HCT116 (cell line): ENCODE measurements at regions of chr21 and their contacts with region 1.

Region 1: DNA sequence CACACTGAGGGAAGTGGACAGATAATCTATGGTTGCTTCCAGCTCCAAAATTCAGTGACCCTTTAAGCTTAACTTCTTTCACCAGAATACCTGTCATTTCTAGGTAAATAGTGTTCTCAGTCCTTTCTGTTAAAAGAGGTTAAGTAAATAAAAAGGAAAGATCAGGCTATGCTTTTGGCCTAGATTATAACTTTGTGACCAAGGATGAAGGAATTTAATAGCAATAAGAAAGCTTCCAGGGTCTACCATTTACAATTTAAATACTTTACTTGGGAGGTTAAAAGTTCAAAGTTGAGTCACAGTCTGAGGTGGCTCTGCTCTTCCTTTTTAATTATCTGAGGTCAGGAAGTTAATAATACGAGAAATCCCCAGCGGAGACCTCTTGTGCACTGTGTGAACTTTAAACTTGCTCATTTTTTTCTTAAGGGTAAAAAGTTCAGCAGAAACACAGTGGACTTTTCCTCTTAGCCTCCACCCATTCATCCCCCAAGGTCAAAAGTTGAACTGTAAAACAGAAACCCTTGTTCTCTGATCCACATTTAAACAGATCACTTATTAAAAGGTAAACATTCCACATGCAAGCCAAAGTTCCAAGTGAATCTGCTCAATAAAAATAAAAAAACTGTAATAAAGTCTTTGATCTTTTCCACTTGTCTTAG is 187.1 kb downstream of the NRIP1 start:
- DNase-seq: no peak
- ATAC-seq: peak; percentile 58
- H3K4me3 ChIP-seq: peak overlapping the region in 1 of 2 experiments; percentile 3; a peak in 1 of 4 replicates
- H3K27ac ChIP-seq: peak overlapping the region; percentile 85; the same call in 1 of the 2 replicates
- H3K4me1 ChIP-seq: peaks cover 63 to 78% of the 10 kb centered on the region in 2 experiments
- H3K27me3 ChIP-seq: no peaks in the 10 kb centered on the region
- CTCF ChIP-seq: no peak
- POLR2A ChIP-seq: no peak
- RAD21 ChIP-seq: no peak

Region 2: GRCh38 chr21:14567331-14568279 is 310.1 kb before region 1 on chr21:
- CTCF ChIA-PET with region 1: no interaction called
- POLR2A ChIA-PET with region 1: no interaction called
- RAD21 ChIA-PET with region 1: no interaction called
- intact Hi-C with region 1: no loop called
- DNase-seq: no peak
- ATAC-seq: no peak
- H3K4me3 ChIP-seq: no peak overlapping the region
- H3K27ac ChIP-seq: no peak overlapping the region
- H3K4me1 ChIP-seq: 0 out of 4 replicates have a peak, but pooled peaks cover 0 to 3% of the 10 kb centered on the region in 2 experiments
- H3K27me3 ChIP-seq: no peaks in the 10 kb centered on the region
- CTCF ChIP-seq: no peak
- POLR2A ChIP-seq: no peak
- RAD21 ChIP-seq: no peak

Region 3: DNA sequence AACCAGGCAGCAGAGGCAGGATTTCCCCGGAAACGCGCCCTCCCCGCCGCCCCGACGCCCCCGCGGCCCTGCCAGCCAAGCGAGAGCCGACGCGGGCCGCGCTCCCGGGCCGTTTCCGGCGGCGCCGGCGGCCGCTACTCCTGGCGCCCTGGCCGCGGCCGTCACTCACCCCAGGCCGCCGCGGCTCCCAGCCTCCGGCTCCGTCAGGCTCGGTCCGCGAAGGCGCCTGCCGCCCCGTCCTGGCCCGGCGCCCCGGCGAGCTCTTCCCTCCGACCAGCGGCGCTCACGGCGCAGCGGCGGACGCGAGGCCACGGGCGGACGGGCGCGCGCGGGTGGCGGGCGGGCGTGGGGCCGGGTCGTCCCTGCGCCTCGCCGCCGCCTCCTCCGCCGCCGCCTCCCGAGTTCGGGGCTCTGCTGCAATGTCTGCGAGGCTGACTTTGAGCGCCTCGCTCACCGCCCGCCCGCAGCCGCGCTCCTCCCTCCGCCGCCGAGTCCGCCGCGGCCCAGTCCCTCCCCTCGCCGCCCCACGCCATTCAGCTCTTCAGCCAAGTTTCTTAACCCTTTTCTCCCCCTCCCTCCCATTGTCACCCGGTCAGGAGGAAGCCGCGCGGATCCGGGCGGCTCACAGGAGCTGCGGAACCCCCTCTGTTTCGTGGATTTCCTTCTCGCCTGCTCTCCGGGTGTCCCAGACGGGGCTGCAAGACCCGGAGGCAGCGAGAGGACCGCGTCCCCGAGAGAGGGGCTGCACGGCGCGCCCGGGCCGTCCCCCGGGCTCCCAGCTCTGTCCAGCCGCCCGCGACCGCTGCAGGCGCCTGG is 187.1 kb after region 1 on chr21 and contains the start of gene NRIP1:
- CTCF ChIA-PET with region 1: no interaction called
- POLR2A ChIA-PET with region 1: no interaction called
- RAD21 ChIA-PET with region 1: no interaction called
- intact Hi-C with region 1: loop called (anchors 5 kb)
- DNase-seq: no peak
- ATAC-seq: peak; percentile 74
- H3K4me3 ChIP-seq: peak within 1 kb of the TSS; percentile 53 to 59
- H3K27ac ChIP-seq: peak within 1 kb of the TSS; percentile 95
- H3K4me1 ChIP-seq: peaks cover 17 to 42% of the 10 kb centered on the region in 2 experiments
- H3K27me3 ChIP-seq: no peaks in the 10 kb centered on the region
- CTCF ChIP-seq: no peak
- POLR2A ChIP-seq: no peak
- RAD21 ChIP-seq: no peak
- total RNA-seq, gene NRIP1: 29.6 TPM

Region 4: GRCh38 chr21:15084668-15085067 is 207.0 kb after region 1 on chr21:
- CTCF ChIA-PET with region 1: no interaction called
- POLR2A ChIA-PET with region 1: no interaction called
- RAD21 ChIA-PET with region 1: no interaction called
- intact Hi-C with region 1: no loop called
- DNase-seq: no peak
- ATAC-seq: no peak
- H3K4me3 ChIP-seq: no peak overlapping the region
- H3K27ac ChIP-seq: no peak overlapping the region
- H3K4me1 ChIP-seq: no peaks in the 10 kb centered on the region
- H3K27me3 ChIP-seq: no peaks in the 10 kb centered on the region
- CTCF ChIP-seq: no peak
- POLR2A ChIP-seq: no peak
- RAD21 ChIP-seq: no peak

Region 5: GRCh38 chr21:15221799-15222386 is 344.2 kb after region 1 on chr21:
- CTCF ChIA-PET with region 1: no interaction called
- POLR2A ChIA-PET with region 1: no interaction called
- RAD21 ChIA-PET with region 1: no interaction called
- intact Hi-C with region 1: loop called (anchors 10 kb)
- DNase-seq: peak; percentile 22
- ATAC-seq: peak; percentile 53
- H3K4me3 ChIP-seq: no peak overlapping the region
- H3K27ac ChIP-seq: peak overlapping the region; percentile 22; the same call in 1 of the 2 replicates
- H3K4me1 ChIP-seq: peaks cover 0 to 37% of the 10 kb centered on the region in 2 experiments; a peak in 2 of 4 replicates
- H3K27me3 ChIP-seq: no peaks in the 10 kb centered on the region
- CTCF ChIP-seq: no peak
- POLR2A ChIP-seq: no peak
- RAD21 ChIP-seq: no peak